Sigmoid colon (tissue), 7 donors: ENCODE measurements at regions of chr17 and their contacts with region 1.

Region 1: GRCh38 chr17:48084932-48085444 is 16.3 kb downstream of the CBX1 start:
- DNase-seq: no peak
- H3K4me3 ChIP-seq: no peak overlapping the region
- H3K27ac ChIP-seq: peak overlapping the region in 1 of 4 donors; percentile 32
- H3K4me1 ChIP-seq: peaks cover 0 to 24% (median 21%) of the 10 kb centered on the region in 4 donors
- H3K27me3 ChIP-seq: no peaks in the 10 kb centered on the region
- CTCF ChIP-seq: no peak
- EP300 ChIP-seq: no peak
- POLR2A ChIP-seq: no peak

Region 2: GRCh38 chr17:48123111-48123510 is 38.1 kb after region 1 on chr17:
- intact Hi-C with region 1: loop called (anchors 5 kb)
- DNase-seq: no peak
- H3K4me3 ChIP-seq: no peak overlapping the region
- H3K27ac ChIP-seq: no peak overlapping the region
- H3K4me1 ChIP-seq: no peaks in the 10 kb centered on the region
- H3K27me3 ChIP-seq: no peaks in the 10 kb centered on the region
- CTCF ChIP-seq: no peak
- EP300 ChIP-seq: no peak
- POLR2A ChIP-seq: no peak